Heart right ventricle (tissue), 16 donors: ENCODE measurements at regions of chr17 and their contacts with region 1.

Region 1: DNA sequence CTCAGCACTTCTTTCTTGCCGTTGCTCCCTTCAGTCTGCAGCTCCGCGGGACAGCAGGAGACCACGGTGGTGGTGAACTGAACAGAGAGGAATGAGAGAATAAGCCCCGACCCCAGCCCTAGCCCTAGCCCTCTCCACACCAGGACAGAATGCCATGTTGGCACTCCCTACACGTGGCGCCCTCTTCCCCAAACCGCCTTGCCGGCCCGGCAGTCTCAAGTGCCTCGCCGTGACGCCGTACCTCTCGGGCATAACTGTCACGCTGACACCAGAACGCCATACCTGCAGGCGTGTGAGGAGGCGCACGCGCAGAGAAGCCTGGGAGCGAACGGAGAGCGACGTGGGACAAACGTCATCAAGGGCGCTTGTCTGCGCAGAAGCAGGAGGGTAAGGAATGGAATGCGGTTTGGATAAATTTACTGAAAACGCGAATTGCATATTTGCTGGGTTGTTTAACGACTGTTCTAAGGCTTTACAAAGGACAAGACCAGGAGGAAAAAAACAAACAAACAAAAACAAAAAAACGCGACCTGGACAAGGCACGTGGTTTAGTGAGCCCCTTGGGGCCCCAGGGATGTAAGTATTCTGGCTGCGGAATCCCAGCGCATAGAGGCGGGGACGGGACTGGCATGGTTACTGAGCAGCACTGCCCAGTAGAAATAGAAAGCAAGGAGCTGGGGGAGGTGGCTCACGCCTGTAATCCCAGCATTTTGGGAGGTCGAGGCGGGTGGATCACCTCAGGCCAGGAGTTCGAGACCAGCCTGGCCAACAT is at the start of gene AARSD1:
- DNase-seq: peak; percentile 91
- ATAC-seq: peak; percentile 94 to 99 (median 98)
- H3K4me3 ChIP-seq: peak within 1 kb of the TSS; percentile 50 to 89 (median 77)
- H3K27ac ChIP-seq: peak within 1 kb of the TSS; percentile 0 to 93 (median 88)
- H3K4me1 ChIP-seq: peaks cover 0 to 17% (median 14%) of the 10 kb centered on the region in 9 donors
- H3K27me3 ChIP-seq: no peaks in the 10 kb centered on the region
- CTCF ChIP-seq: no peak
- total RNA-seq, gene AARSD1: 20.0 to 34.7 (median 28.9) TPM

Region 2: GRCh38 chr17:42512626-42513250 is 451.6 kb before region 1 on chr17:
- intact Hi-C with region 1: no loop called
- DNase-seq: no peak
- ATAC-seq: peak in 1 of 8 donors; percentile 6
- H3K4me3 ChIP-seq: no peak overlapping the region
- H3K27ac ChIP-seq: peak overlapping the region in 9 of 10 donors; percentile 4 to 86 (median 71)
- H3K4me1 ChIP-seq: peaks cover 17 to 59% (median 30%) of the 10 kb centered on the region in 9 donors
- H3K27me3 ChIP-seq: no peaks in the 10 kb centered on the region
- CTCF ChIP-seq: no peak

Region 3: DNA sequence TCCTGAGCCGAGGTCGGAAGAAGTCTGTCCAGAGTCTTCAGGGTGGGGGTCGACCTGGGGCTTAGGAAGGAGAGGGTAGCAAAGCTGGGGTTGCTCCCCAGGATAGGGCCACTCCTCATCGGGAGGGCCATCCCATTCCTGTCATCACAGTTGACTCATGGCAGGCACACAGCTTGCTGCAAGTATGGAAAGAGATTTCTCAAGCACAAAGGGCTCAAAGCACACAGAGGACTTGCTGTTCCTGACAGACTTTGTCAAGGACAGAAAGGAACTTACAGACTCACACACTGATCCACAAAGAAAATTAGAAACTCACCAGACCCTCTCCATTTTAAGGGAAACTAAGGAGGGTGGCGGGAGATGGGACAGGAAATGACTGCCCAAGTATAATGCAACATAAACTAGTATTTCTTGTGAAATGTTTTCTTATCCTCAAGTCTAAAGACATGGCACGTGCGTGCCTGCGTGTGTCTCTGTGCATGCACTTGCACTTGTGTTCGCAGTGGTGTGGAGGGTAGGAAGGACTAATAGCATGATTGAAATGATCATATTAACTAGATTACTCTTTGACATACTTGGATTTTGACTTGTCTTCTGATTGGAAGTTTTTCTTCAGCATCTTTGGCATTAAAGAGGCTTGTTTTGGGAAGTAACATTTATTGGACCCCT is 117.6 kb before region 1 on chr17:
- intact Hi-C with region 1: no loop called
- DNase-seq: no peak
- ATAC-seq: peak in 3 of 8 donors; percentile 9 to 54 (median 45)
- H3K4me3 ChIP-seq: no peak overlapping the region
- H3K27ac ChIP-seq: peak overlapping the region in 3 of 10 donors; percentile 5 to 25 (median 15)
- H3K4me1 ChIP-seq: peaks cover 0 to 30% (median 6%) of the 10 kb centered on the region in 9 donors
- H3K27me3 ChIP-seq: no peaks in the 10 kb centered on the region
- CTCF ChIP-seq: no peak

Region 4: DNA sequence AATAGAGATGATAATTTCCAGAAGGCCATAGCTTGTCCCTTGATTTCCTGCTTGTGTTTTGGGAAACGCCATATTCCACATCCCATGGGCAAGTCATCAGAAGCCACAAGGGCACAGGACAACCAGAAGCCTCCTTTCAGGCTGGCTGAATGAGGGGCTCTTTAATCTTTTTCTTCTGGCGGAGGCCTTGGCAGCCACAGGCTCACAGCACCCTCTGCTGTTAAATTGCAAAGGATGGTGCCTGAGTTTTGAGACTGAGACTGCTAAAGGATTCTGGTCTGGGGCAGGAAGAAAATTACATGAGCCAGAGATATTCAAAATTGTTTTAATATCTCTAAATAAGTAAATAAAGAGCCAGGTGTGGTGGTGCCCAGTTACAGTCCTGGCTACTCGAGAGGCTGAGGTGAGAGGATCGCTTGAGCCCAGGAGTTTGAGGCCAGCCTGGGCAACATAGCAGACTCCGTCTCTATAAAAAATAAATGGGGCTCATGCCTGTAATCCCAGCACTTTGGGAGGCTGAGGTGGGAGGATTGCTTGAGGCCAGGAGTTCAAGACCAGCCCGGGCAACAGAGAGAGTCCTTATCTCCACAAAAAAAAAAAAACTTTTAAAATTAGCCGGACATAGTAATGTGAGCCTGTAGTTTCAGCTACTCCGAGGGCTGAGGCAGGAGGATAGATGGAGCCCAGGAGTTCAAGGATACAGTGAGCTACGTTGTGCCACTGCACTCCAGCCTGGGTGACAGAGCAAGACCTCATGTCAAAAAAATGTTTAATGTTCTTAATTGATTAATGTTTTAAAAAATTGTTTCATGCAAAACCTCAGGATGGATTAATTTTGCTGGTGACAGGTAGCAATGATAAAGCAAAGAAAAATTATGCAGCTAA is 26.4 kb before region 1 on chr17:
- intact Hi-C with region 1: loop called in 1 of 10 experiments (anchors 2 kb)
- DNase-seq: peak in 1 of 2 donors; percentile 23
- ATAC-seq: peak; percentile 59 to 80 (median 76)
- H3K4me3 ChIP-seq: no peak overlapping the region
- H3K27ac ChIP-seq: no peak overlapping the region
- H3K4me1 ChIP-seq: peaks cover 0 to 3% (median 0%) of the 10 kb centered on the region in 9 donors
- H3K27me3 ChIP-seq: peaks cover 0 to 4% (median 0%) of the 10 kb centered on the region in 7 donors
- CTCF ChIP-seq: peak; percentile 41 to 80 (median 69)